CD8-positive, alpha-beta memory T cell (primary cell): ENCODE measurements at regions of chr15 and their contacts with region 1.

Region 1: GRCh38 chr15:43225201-43225949 is 4.6 kb upstream of the EPB42 start:
- DNase-seq: peak in 3 of 5 donors; percentile 50 to 58 (median 56)
- H3K4me3 ChIP-seq: no peak overlapping the region
- H3K4me3 Mint-ChIP-seq: peak overlapping the region in 3 of 7 donors; percentile 9 to 63 (median 25)
- H3K27ac ChIP-seq: no peak overlapping the region
- H3K27ac Mint-ChIP-seq: peak overlapping the region in 1 of 8 donors; percentile 66
- H3K4me1 ChIP-seq: no peaks in the 10 kb centered on the region
- H3K4me1 Mint-ChIP-seq: peaks cover 6 to 8% (median 6%) of the 10 kb centered on the region in 3 donors
- H3K27me3 ChIP-seq: no peaks in the 10 kb centered on the region
- H3K27me3 Mint-ChIP-seq: peaks cover 19 to 31% of the 10 kb centered on the region in 2 donors

Region 2: DNA sequence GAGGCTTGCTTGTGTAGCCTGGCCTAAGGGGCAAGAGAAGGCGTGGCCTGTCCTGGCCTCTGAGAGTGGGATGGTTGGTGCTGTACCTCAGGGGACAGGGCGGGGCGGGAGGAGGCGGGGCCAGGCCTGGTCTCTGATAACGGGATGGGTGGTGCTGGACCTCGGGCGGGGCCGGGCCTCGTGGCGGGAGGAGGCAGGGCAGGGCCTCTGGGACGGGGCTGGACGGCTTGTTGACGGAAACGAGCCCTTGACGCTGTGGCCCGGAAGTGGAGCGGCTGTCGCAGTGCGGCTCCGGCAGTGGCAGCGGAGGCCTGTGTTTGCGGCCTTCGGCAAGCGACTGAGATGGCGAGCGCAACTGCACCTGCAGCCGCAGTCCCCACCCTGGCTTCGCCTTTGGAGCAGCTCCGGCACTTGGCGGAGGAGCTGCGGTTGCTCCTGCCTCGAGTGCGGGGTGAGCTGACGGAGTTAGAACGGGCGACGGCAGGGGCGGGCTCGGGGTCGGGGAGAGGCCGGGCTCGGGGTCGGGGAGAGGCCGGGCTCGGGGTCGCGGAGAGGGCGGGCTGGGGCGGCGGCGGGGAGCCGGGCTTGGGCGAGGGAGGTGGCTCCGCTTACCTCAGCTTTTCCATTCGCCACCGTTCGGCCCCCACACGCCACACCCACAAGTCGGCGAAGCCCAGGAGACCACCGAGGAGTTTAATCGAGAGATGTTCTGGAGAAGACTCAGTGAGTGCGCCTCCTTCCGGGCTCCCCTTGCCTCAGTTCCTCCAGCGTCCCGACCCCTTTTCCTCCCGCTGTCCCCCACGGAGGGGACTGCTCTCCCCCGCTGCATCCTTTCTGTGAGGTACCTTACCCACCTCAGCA is 40.0 kb before region 1 on chr15 and contains the start of gene CCNDBP1:
- CTCF ChIA-PET with region 1: no interaction called
- POLR2A ChIA-PET with region 1: no interaction called
- DNase-seq: peak; percentile 80 to 92 (median 87)
- H3K4me3 ChIP-seq: peak within 1 kb of the TSS; percentile 81
- H3K4me3 Mint-ChIP-seq: peak within 1 kb of the TSS; percentile 95 to 98 (median 96)
- H3K27ac ChIP-seq: peak within 1 kb of the TSS; percentile 71
- H3K27ac Mint-ChIP-seq: peak within 1 kb of the TSS; percentile 91 to 99 (median 98)
- H3K4me1 ChIP-seq: peaks cover 28% of the 10 kb centered on the region
- H3K4me1 Mint-ChIP-seq: peaks cover 39 to 47% (median 45%) of the 10 kb centered on the region in 3 donors
- H3K27me3 ChIP-seq: no peaks in the 10 kb centered on the region
- H3K27me3 Mint-ChIP-seq: peaks cover 0 to 2% of the 10 kb centered on the region in 2 donors
- total RNA-seq, gene CCNDBP1: 61.8 to 63.2 TPM

Region 3: DNA sequence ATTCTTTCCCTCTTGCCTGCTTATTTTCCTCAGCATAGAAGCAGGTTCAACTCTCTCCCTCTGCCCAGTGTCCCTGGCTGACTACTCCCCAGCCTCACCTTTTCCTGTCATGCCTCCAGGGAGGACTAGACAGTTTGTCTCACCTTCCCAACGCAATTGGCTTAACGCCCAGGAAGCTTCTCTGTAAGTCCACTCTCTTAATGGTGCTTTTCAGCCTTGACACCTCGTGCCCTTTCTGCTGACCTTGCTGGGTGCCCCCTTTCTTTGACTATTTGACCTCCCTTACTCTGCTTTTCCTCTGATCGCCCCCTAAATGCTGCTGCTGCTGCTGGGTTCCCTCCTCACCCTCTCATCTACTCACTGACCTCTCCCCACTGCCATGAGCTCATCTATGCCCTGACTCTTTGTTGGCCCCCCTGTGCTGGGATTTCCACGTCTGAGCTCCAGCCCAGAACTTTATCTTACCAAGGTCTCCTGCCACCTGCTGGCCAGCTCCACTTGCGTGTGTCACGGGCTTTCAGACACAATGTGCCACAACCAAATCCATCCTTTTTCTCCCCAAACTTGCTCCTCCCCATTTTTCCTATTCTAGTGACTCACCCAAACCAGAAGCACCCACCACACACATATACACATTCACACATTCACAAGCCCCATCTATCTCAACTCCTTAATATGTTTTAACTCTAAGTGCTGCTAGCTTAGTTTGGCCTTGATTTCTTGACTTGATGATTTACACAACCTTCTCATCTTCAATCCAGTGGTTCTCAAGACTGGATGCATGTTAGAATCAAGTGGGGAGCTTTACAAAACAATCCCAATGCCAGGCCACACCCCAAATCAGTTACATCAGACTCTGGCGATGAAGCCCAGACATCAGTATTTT is 21.1 kb before region 1 on chr15:
- CTCF ChIA-PET with region 1: interaction called, 12 read pairs
- POLR2A ChIA-PET with region 1: no interaction called
- DNase-seq: peak in 4 of 5 donors; percentile 12 to 62 (median 19)
- H3K4me3 ChIP-seq: no peak overlapping the region
- H3K4me3 Mint-ChIP-seq: no peak overlapping the region
- H3K27ac ChIP-seq: no peak overlapping the region
- H3K27ac Mint-ChIP-seq: peak overlapping the region in 3 of 8 donors; percentile 55 to 62 (median 58)
- H3K4me1 ChIP-seq: no peaks in the 10 kb centered on the region
- H3K4me1 Mint-ChIP-seq: peaks cover 3 to 5% (median 5%) of the 10 kb centered on the region in 3 donors
- H3K27me3 ChIP-seq: no peaks in the 10 kb centered on the region
- H3K27me3 Mint-ChIP-seq: peaks cover 1 to 7% of the 10 kb centered on the region in 2 donors

Region 4: DNA sequence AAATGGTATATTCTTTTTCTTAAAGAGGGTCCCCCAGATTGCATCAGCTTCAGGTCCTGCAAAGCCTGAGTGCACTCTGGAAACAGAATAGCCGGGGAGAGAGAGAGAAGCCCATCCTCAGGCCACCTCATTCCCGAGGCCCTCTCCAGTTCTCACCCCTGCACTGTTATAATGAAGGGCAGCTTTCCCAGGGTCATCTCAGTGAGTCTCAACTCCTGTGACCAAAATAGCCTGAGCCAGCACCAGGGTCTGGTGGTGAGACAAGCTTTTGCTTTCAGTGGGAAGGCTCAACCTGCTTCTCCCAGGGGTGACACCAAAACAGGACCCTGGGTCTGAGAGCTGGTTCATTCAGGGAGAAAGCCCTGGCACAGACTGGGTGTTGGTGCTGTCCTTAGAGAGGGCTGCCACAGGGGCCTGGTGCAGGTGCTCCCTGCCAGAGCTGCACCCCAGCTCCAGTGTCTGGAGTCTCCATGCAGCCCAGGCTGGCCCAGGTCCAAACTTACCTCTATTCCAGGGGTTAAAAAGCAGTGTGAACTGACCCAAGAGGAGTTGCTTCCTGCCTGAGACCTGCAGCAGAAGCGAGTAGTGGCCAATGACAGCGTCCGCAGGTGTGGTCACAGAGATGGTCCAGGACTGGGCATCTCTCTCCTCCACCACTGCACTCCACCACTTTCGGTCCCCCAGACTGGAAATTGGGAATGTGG is 10.6 kb before region 1 on chr15:
- CTCF ChIA-PET with region 1: interaction called, 11 read pairs
- POLR2A ChIA-PET with region 1: no interaction called
- DNase-seq: no peak
- H3K4me3 ChIP-seq: no peak overlapping the region
- H3K4me3 Mint-ChIP-seq: no peak overlapping the region
- H3K27ac ChIP-seq: no peak overlapping the region
- H3K27ac Mint-ChIP-seq: no peak overlapping the region
- H3K4me1 ChIP-seq: no peaks in the 10 kb centered on the region
- H3K4me1 Mint-ChIP-seq: no peaks in the 10 kb centered on the region
- H3K27me3 ChIP-seq: no peaks in the 10 kb centered on the region
- H3K27me3 Mint-ChIP-seq: peaks cover 10 to 17% of the 10 kb centered on the region in 2 donors

Region 5: GRCh38 chr15:43285609-43286037 is 60.2 kb after region 1 on chr15:
- CTCF ChIA-PET with region 1: interaction called, 66 read pairs
- POLR2A ChIA-PET with region 1: no interaction called
- DNase-seq: peak; percentile 15 to 54 (median 48)
- H3K4me3 ChIP-seq: no peak overlapping the region
- H3K4me3 Mint-ChIP-seq: no peak overlapping the region
- H3K27ac ChIP-seq: no peak overlapping the region
- H3K27ac Mint-ChIP-seq: peak overlapping the region in 1 of 8 donors; percentile 55
- H3K4me1 ChIP-seq: no peaks in the 10 kb centered on the region
- H3K4me1 Mint-ChIP-seq: peaks cover 0 to 4% (median 0%) of the 10 kb centered on the region in 3 donors
- H3K27me3 ChIP-seq: no peaks in the 10 kb centered on the region
- H3K27me3 Mint-ChIP-seq: peaks cover 6 to 21% of the 10 kb centered on the region in 2 donors